ENCODE measurements at regions of chr10 and their contacts with region 1.

Region 1: DNA sequence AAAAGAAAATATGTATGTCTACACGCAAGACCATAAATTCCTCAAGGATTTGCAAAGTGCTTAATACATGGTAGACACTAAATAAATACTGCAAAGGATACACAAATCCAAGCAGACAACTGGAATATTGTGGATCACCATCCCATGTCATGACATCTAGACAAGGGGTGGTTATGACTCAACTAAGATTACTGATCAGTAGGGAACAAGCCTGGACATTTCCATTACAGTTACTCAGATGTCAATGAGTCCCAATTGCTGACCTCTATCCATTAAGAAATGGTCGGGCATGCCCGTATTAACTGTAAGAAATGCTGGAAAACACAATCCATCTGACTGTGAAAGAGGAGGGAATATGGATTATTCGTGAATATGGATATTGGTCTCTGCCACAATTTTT is 27.6 kb upstream of the RUFY2 start:
- DNase-seq: no peak
- H3K4me3 ChIP-seq: no peak overlapping the region
- H3K27ac ChIP-seq: no peak overlapping the region
- H3K4me1 ChIP-seq: no peaks in the 10 kb centered on the region
- H3K27me3 ChIP-seq: no peaks in the 10 kb centered on the region
- CTCF ChIP-seq: no peak
- EP300 ChIP-seq: no peak
- POLR2A ChIP-seq: no peak
- RAD21 ChIP-seq: no peak

Region 2: GRCh38 chr10:68423522-68423921 is 11.1 kb before region 1 on chr10:
- CTCF ChIA-PET with region 1: no interaction called
- POLR2A ChIA-PET with region 1: interaction called, 15 read pairs
- DNase-seq: no peak
- H3K4me3 ChIP-seq: no peak overlapping the region
- H3K27ac ChIP-seq: no peak overlapping the region
- H3K4me1 ChIP-seq: no peaks in the 10 kb centered on the region
- H3K27me3 ChIP-seq: no peaks in the 10 kb centered on the region
- CTCF ChIP-seq: no peak
- EP300 ChIP-seq: no peak
- POLR2A ChIP-seq: no peak
- RAD21 ChIP-seq: no peak